ENCODE measurements at regions of chr15 and their contacts with region 1.

Region 1: GRCh38 chr15:44968475-44968874 is 12.0 kb downstream of the TERB2 start:
- DNase-seq: no peak

Region 2: GRCh38 chr15:45037936-45038335 is 69.5 kb after region 1 on chr15:
- intact Hi-C with region 1: loop called in 1 of 2 experiments (anchors 5 kb)
- DNase-seq: no peak

Region 3: GRCh38 chr15:45146405-45146804 is 177.9 kb after region 1 on chr15:
- intact Hi-C with region 1: no loop called
- DNase-seq: peak; percentile 46